A549 (cell line): ENCODE measurements at regions of chr18 and their contacts with region 1.

Region 1: GRCh38 chr18:12460874-12461273 is 53.1 kb downstream of the PRELID3A start:
- DNase-seq: no peak
- ATAC-seq: no peak
- H3K4me3 ChIP-seq: no peak overlapping the region
- H3K27ac ChIP-seq: no peak overlapping the region
- H3K4me1 ChIP-seq: no peaks in the 10 kb centered on the region
- CTCF ChIP-seq: no peak
- EP300 ChIP-seq: no peak
- POLR2A ChIP-seq: no peak
- RAD21 ChIP-seq: no peak

Region 2: DNA sequence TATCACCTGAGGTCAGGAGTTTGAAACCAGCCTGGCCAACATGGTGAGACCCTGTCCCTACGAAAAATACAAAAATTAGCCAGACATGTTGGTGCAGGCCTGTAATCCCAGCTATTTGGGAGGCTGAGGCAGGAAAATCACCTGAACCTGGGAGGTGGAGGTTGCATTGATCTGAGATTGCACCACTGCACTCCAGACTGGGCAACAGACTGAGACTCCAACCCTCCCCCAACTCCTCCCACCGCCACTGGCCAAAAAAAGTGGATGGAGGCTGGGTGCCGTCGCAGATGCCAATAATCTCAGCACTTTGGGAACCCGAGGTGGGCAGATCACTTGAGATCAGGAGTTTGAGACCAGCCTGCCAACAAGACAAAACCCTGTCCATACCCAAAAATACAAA is 207.2 kb after region 1 on chr18:
- CTCF ChIA-PET with region 1: no interaction called
- POLR2A ChIA-PET with region 1: interaction called, 14 read pairs
- DNase-seq: no peak
- ATAC-seq: no peak
- H3K4me3 ChIP-seq: no peak overlapping the region
- H3K27ac ChIP-seq: no peak overlapping the region
- H3K4me1 ChIP-seq: no peaks in the 10 kb centered on the region
- CTCF ChIP-seq: no peak
- EP300 ChIP-seq: no peak
- POLR2A ChIP-seq: no peak
- RAD21 ChIP-seq: no peak